ENCODE measurements at regions of chr7 and their contacts with region 1.

Region 1: GRCh38 chr7:38215735-38216670 is 38.0 kb downstream of the STARD3NL start:
- DNase-seq: peak; percentile 74
- H3K4me3 Mint-ChIP-seq: no peak overlapping the region
- H3K27ac Mint-ChIP-seq: peak overlapping the region; percentile 37
- H3K4me1 Mint-ChIP-seq: peaks cover 17% of the 10 kb centered on the region
- H3K27me3 Mint-ChIP-seq: no peaks in the 10 kb centered on the region
- CTCF ChIP-seq: peak; percentile 93

Region 2: DNA sequence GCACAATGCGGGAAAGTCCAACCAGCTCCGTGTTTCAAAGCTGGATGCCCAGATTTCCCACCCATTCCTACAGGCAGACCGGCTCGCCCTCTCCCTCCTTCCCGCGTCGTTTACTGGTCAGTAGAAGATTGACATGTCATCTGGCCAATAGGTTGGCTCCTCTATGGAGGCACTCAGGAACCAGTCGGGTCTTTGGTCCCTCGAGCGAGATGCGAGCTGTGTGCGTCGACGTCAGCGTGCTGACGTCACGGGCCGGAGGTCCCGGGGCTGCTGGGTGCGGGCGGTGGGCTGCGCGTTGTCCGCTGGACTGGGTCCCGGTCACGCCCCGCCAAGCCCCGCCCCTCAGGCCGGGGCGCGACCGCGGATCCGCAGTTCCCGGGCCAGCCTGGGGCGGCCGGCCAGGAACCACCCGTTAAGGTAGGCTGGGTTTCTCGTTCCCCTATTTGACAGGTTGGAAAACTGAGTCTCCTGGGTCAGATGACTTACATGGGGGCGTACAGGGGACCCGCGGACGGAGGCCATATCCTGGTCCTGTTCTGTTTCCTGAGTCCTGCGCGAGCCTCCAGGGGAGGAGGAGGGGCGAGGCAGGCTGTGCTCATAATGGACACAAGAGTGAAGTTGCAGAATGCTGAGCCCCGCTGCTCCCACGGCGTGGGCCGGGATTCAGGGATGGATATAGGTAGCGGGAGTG is 37.9 kb before region 1 on chr7 and contains the start of gene STARD3NL:
- CTCF ChIA-PET with region 1: interaction called, 8 read pairs
- intact Hi-C with region 1: loop called (anchors 5 kb)
- DNase-seq: peak; percentile 99
- H3K4me3 Mint-ChIP-seq: peak within 1 kb of the TSS; percentile 95
- H3K27ac Mint-ChIP-seq: peak within 1 kb of the TSS; percentile 90
- H3K4me1 Mint-ChIP-seq: peaks cover 17% of the 10 kb centered on the region
- H3K27me3 Mint-ChIP-seq: no peaks in the 10 kb centered on the region
- CTCF ChIP-seq: no peak
- total RNA-seq, gene STARD3NL: 60.7 and 66.4 TPM in 2 replicates

Region 3: GRCh38 chr7:38245409-38245977 is 29.5 kb after region 1 on chr7:
- CTCF ChIA-PET with region 1: no interaction called
- intact Hi-C with region 1: loop called (anchors 1 kb)
- DNase-seq: no peak
- H3K4me3 Mint-ChIP-seq: no peak overlapping the region
- H3K27ac Mint-ChIP-seq: no peak overlapping the region
- H3K4me1 Mint-ChIP-seq: no peaks in the 10 kb centered on the region
- H3K27me3 Mint-ChIP-seq: peaks cover 14% of the 10 kb centered on the region
- CTCF ChIP-seq: no peak

Region 4: GRCh38 chr7:38318803-38319416 is 102.9 kb after region 1 on chr7:
- CTCF ChIA-PET with region 1: interaction called, 4 read pairs
- intact Hi-C with region 1: loop called (anchors 2 kb)
- DNase-seq: peak; percentile 53
- H3K4me3 Mint-ChIP-seq: no peak overlapping the region
- H3K27ac Mint-ChIP-seq: no peak overlapping the region
- H3K4me1 Mint-ChIP-seq: peaks cover 8% of the 10 kb centered on the region
- H3K27me3 Mint-ChIP-seq: peaks cover 52% of the 10 kb centered on the region
- CTCF ChIP-seq: peak; percentile 72

Measured in Calu3 (cell line).